Upper lobe of right lung (tissue), 1 donor: ENCODE measurements at regions of chr11 and their contacts with region 1.

Region 1: DNA sequence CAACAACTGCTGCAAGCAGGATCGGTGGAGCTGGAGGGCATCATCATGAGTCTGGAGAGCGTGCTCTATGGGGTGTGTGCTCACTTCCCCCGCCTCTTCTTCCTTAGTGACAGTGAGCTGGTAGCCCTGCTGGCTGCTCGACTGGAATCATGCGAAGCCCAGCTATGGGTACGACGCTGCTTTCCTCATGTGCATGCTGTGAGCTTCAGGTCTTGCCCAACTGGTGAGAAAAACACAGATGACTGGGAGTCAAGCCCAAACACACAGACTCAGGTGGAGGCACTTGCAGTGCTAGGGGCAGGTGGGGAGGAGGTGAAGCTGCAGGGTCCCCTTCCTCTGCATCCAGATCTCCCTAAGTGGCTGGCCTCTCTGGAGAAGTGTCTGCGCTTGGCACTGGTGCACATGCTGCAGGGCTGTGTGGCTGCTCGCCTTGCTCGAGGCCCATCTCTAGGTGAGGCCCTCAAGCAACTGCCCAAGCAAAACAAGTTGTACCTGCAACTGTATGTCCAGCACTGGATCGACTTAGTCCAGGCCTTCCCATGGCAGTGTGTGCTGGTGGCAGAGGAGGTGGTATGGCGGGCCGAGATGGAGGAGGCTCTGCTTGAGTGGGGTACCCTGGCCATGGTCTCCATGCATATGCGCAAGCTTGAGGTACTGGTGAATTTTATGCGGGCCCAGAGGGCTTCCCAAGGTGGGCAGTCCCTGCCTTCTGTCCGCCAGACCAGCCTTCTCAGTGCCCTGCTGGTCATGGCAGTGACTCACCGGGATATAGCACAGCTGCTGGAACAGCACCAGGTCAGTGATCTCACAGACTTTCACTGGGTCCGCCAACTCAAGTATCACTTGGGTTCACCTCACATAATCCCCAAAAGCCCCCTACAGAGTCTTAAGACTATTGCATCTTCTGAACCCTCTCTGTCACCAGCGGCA is 48.1 kb downstream of the DNHD1 start:
- DNase-seq: peak; percentile 48
- ATAC-seq: no peak
- H3K4me3 ChIP-seq: no peak overlapping the region
- H3K27ac ChIP-seq: no peak overlapping the region
- H3K4me1 ChIP-seq: no peaks in the 10 kb centered on the region
- H3K27me3 ChIP-seq: no peaks in the 10 kb centered on the region
- CTCF ChIP-seq: no peak

Region 2: DNA sequence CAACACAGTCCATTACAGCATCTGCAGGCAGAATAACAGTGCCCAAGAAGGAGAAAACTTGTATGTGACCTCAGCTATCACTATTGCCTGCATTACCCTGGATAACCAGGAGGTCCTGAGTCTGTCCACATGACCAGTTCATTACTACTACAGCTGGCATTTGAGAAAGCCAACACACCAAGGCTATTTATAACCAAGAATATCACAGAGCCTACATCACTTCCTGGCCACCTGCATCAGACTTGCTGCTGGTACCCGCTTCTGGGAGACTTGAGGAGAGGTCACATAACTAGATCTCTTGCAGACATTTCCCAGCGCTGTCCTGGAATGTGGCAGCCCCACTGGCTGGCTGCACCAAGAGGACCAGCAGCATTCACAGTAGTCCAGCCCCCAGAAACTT is 448.8 kb before region 1 on chr11:
- intact Hi-C with region 1: no loop called
- DNase-seq: no peak
- ATAC-seq: no peak
- H3K4me3 ChIP-seq: no peak overlapping the region
- H3K27ac ChIP-seq: no peak overlapping the region
- H3K4me1 ChIP-seq: no peaks in the 10 kb centered on the region
- H3K27me3 ChIP-seq: no peaks in the 10 kb centered on the region
- CTCF ChIP-seq: no peak

Region 3: DNA sequence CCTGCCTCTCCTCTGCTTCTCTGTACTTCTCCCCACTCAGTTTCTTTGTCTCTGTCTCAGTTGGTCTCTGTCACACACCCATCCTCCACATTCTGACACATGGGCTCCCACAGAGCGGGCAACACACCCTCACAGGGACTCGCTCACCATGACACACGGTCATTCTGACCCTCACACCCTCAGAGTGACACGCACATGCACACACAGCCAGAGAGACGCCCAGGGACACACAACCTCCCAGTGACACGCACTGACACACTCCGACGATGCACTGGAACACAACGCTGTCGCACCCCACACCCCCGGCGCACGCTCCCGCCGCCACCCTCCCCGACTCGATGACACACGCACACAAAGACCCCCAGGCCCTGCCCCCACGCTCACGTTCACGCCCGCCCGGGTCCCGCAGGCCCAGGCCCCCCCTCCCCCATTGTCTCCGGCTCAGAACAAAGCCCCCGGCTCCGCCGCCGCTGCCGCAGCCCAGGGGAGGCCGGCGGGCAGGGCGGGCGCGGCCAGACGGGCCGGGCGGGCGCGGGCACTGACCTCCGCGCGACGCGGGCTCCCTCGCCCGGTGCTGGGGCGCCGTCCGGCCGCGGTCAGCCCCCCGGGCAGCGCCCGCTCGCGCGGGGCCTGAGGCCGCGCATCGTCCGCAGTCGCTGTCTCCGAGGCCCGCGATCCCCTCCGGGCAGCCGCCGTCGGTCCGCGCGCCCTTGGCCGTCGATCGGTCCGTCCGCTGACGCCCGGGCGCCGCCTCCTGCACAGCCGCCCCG is 110.0 kb after region 1 on chr11:
- intact Hi-C with region 1: no loop called
- DNase-seq: peak; percentile 68
- ATAC-seq: peak; percentile 66
- H3K4me3 ChIP-seq: peak overlapping the region; percentile 47
- H3K27ac ChIP-seq: peak overlapping the region; percentile 36
- H3K4me1 ChIP-seq: peaks cover 7% of the 10 kb centered on the region
- H3K27me3 ChIP-seq: peaks cover 8% of the 10 kb centered on the region
- CTCF ChIP-seq: no peak

Region 4: DNA sequence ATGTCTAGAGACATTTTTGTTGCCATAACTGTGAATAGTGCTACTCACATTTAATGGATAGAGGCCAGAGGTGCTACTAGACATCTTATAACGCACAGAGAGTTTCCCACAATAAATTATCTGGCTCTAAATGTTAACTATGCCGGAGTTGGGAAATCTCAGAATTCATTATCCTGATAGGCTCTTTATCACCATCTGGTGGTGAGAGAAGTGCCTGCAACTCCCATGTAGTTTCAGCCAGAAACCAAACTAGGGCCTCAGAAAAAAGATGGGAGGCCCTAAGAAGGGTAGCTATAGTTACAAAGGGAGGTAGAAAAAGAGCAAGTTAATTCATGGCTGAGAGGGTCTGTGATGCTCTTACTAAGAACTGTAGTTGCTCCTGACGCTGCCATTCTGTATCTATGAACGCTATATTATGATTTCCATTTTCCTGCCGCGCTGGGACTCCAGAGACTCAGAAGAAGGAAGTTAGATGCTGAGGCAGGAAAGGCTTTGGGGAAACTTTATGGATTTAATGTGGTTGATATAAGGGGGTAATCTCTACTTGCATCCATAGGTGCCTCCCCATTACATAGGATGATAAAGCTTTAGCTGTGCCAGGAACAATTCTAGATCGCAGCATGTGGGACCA is 160.8 kb after region 1 on chr11:
- intact Hi-C with region 1: loop called (anchors 10 kb)
- DNase-seq: no peak
- ATAC-seq: peak; percentile 82
- H3K4me3 ChIP-seq: no peak overlapping the region
- H3K27ac ChIP-seq: no peak overlapping the region
- H3K4me1 ChIP-seq: peaks cover 4% of the 10 kb centered on the region
- H3K27me3 ChIP-seq: no peaks in the 10 kb centered on the region
- CTCF ChIP-seq: peak; percentile 93